Left lung (tissue), 14 donors: ENCODE measurements at regions of chr4 and their contacts with region 1.

Region 1: DNA sequence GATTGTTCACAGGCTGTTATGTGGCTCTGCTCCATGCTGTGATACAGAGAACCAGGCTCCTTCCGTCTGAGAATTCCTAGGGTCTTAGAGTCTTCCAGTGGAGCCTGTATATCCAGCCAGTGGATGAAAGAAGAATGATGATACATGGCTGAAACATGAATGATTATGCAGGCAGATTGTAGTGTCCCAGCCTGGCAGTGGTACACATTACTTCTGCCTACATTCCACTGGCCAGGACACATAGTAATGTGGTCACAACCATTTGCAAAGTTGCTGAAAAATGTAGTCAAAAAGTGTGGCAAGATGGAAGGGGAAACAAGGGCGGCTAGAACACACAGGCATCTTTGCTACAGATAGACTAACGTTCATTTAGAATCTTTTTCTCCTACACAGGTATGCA is 4.5 kb upstream of the GBA3 start:
- DNase-seq: no peak
- ATAC-seq: no peak
- H3K4me3 ChIP-seq: no peak overlapping the region
- H3K27ac ChIP-seq: no peak overlapping the region
- H3K4me1 ChIP-seq: no peaks in the 10 kb centered on the region
- H3K27me3 ChIP-seq: no peaks in the 10 kb centered on the region
- CTCF ChIP-seq: no peak

Region 2: DNA sequence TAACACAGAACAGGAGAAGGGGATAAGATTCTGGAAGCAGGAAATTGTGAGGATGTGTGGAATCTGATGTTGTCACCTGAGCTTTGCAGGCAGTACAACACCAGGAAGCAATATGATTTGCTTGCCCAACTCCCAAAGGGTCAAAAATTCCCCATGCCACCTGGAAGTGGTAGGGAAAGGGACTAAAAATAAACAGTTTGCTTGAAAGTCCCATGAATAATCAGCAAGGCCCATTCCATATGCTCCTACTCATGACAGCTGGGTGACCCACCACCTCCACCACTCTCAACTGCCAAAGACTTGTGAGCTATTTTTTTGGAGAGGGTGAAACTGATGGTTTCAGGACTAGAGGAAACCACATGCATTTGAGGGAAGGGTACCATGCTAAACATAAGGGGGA is 908.1 kb before region 1 on chr4:
- intact Hi-C with region 1: loop called in 1 of 2 experiments (anchors 10 kb)
- DNase-seq: no peak
- ATAC-seq: no peak
- H3K4me3 ChIP-seq: no peak overlapping the region
- H3K27ac ChIP-seq: no peak overlapping the region
- H3K4me1 ChIP-seq: no peaks in the 10 kb centered on the region
- H3K27me3 ChIP-seq: no peaks in the 10 kb centered on the region
- CTCF ChIP-seq: no peak

Region 3: GRCh38 chr4:22595684-22596083 is 92.6 kb before region 1 on chr4:
- intact Hi-C with region 1: no loop called
- DNase-seq: no peak
- ATAC-seq: no peak
- H3K4me3 ChIP-seq: no peak overlapping the region
- H3K27ac ChIP-seq: no peak overlapping the region
- H3K4me1 ChIP-seq: no peaks in the 10 kb centered on the region
- H3K27me3 ChIP-seq: no peaks in the 10 kb centered on the region
- CTCF ChIP-seq: no peak